Sigmoid colon (tissue), 7 donors: ENCODE measurements at regions of chr15 and their contacts with region 1.

Region 1: DNA sequence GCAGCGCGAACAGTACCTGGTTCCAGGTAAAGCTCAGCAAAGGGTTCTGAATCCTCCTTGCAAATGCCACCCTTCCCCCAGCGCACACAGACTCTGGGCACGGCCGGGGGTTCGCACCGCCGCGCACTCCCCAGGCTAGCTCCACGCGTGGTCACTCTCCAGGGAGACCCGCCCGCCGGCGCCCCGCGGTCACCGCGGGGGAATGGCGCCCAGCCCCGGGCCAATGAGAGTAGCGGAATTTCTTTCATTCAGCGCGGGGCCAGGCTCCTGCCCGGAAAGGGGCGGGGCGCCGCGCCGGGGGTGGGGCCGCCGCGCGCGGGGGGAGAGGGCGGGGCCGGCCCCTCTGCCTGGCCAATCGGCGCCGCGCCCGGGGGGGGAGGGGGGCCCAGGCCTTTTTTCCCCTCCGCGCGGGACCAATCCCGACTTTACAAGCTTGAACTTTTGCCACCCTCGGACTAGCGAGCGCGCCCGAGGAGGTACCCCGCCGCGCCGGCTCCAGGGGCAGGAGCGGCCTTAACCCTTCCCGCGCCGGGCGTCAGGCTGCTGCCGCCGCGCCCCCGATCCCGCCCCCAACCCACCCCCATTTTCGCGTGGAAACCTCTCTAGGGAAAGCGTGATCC is 1.1 kb upstream of the SMAD6 start:
- DNase-seq: peak; percentile 98
- H3K4me3 ChIP-seq: peak overlapping the region; percentile 57 to 72 (median 66)
- H3K27ac ChIP-seq: peak overlapping the region; percentile 87 to 92 (median 88)
- H3K4me1 ChIP-seq: peaks cover 0 to 44% (median 33%) of the 10 kb centered on the region in 4 donors
- H3K27me3 ChIP-seq: no peaks in the 10 kb centered on the region
- CTCF ChIP-seq: no peak
- EP300 ChIP-seq: peak in 1 of 4 donors; percentile 18
- POLR2A ChIP-seq: no peak

Region 2: GRCh38 chr15:66452971-66453580 is 247.8 kb before region 1 on chr15:
- intact Hi-C with region 1: no loop called
- DNase-seq: no peak
- H3K4me3 ChIP-seq: no peak overlapping the region
- H3K27ac ChIP-seq: no peak overlapping the region
- H3K4me1 ChIP-seq: no peaks in the 10 kb centered on the region
- H3K27me3 ChIP-seq: no peaks in the 10 kb centered on the region
- CTCF ChIP-seq: no peak
- EP300 ChIP-seq: no peak
- POLR2A ChIP-seq: no peak

Region 3: GRCh38 chr15:66619151-66619903 is 81.6 kb before region 1 on chr15:
- intact Hi-C with region 1: loop called (anchors 2 kb)
- DNase-seq: peak; percentile 86
- H3K4me3 ChIP-seq: no peak overlapping the region
- H3K27ac ChIP-seq: peak overlapping the region in 1 of 4 donors; percentile 32
- H3K4me1 ChIP-seq: peaks cover 0 to 41% (median 37%) of the 10 kb centered on the region in 4 donors
- H3K27me3 ChIP-seq: peaks cover 0 to 21% (median 17%) of the 10 kb centered on the region in 3 donors
- CTCF ChIP-seq: peak; percentile 60 to 88 (median 74)
- EP300 ChIP-seq: no peak
- POLR2A ChIP-seq: no peak

Region 4: DNA sequence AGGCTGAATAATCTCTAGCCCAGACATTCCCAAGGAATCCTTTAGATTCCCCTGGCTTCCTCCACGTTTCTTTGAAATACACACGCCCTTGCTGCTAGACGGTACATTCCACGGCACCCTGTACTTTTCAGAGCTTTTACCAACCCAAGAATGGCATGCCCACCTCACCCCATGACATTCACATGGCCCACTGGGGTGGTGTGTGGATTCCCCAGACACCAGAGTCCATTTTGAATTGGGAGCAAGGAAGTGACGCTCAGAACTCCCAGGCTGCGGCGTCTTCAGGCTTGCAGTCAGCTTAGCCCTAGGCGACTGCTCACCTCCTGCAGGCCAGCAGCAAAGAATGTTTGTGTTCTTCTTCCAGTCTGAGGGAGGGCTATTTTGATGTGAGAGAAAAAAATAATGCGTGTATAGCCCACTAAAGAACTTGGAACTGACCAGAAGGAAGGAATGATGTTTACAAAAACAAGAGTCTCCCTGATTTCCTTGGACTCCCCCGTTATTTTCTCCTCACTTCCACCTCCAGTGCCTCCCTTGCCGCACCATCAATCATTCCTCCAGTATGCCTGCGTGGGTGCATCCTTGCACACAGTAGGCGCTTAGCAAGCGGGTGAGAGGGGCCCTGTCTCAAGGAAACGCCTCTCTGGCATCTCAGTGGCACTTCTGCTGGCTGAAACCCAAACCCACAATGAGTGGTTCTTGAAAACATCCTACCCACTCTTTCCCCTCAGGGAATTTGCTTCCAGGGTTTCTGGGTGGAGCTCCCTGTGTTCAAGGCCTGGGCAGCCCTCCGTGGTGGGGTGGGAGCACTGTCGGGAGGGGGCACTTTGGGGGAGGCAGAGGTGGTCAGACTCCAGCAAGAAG is 61.0 kb after region 1 on chr15:
- intact Hi-C with region 1: no loop called
- DNase-seq: no peak
- H3K4me3 ChIP-seq: no peak overlapping the region
- H3K27ac ChIP-seq: peak overlapping the region in 2 of 4 donors; percentile 32 to 74
- H3K4me1 ChIP-seq: peaks cover 0 to 42% (median 40%) of the 10 kb centered on the region in 4 donors
- H3K27me3 ChIP-seq: no peaks in the 10 kb centered on the region
- CTCF ChIP-seq: no peak
- EP300 ChIP-seq: no peak
- POLR2A ChIP-seq: no peak

Region 5: DNA sequence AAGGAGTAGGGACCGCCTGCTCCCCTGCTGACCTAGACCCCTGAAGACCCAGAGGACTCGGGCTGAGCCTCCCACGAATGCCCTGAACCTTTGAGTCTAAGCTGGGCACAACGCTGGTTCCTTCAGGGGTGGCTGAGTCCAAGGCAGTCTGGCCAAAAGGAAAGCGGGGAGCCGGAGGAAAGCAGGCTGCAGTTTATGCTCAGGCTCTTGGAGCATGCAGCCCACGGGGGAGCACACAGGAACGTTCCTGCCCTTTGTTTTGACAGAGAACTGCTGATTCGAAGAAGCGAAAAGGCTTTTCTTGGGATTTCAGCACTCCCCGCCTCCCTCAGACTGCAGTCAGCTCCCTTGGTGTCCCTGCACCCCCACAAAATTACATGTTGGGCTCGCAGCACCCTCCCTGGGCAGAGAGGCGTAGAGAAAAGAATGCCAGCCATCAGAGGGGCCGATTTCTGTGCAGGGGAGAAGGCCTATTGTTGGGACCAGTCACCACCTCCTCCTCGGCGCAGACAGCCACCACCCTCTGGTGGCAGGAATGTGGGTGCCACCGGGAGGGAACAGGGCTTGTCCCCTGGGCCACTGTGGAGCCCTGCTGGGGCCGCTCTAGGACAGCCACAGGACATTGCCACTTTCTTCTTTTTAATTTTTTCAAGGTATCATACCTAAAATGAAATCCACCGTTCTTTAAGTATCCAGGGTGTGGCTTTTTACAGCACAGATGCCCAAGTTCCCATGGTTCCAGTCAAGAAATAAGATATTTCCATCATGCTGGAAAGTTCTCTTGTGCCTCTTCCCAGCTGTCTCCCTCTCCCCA is 73.3 kb after region 1 on chr15:
- intact Hi-C with region 1: loop called (anchors 2 kb)
- DNase-seq: peak; percentile 92
- H3K4me3 ChIP-seq: no peak overlapping the region
- H3K27ac ChIP-seq: peak overlapping the region; percentile 68 to 79 (median 72)
- H3K4me1 ChIP-seq: peaks cover 0 to 38% (median 34%) of the 10 kb centered on the region in 4 donors
- H3K27me3 ChIP-seq: no peaks in the 10 kb centered on the region
- CTCF ChIP-seq: peak; percentile 94 to 98 (median 97)
- EP300 ChIP-seq: no peak
- POLR2A ChIP-seq: no peak

Region 6: DNA sequence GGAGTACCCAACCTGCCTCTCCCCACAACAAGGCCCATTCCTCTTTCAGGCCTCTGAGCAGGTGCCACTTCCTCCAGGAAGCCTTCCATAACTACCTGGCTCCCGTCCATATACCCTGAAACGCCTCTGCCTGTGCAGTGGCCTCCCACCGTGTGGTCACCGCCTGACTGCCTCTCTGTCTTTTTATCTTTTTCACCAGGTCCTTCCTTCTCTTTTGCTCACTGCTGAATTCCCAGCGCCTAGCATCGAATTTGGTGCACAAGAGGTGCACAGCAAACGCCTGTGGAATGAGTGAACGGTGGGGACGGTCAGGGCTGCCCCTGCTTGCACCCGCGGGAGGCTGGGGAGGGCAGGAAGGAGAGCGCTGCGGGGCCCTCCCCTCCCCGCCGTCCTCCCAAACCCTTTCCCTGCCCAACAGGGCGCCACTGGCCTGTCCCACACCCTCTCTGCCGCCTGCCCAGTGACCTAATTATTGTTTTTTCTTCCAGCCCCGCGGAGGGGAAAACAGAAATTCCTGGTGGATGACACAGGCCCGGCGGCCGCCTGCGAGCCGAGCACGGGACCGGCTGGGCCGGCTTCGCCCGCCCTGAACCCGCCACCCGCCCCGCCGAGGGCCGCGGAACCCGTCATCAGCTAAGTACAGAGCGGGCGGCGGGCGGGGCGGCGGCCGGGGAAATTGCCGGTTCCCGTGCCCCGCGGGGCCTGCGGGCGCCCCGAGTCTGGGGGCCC is 141.2 kb after region 1 on chr15:
- intact Hi-C with region 1: loop called (anchors 2 kb)
- DNase-seq: peak; percentile 95
- H3K4me3 ChIP-seq: peak overlapping the region; percentile 23 to 60 (median 54)
- H3K27ac ChIP-seq: peak overlapping the region; percentile 84 to 96 (median 94)
- H3K4me1 ChIP-seq: peaks cover 0 to 15% (median 12%) of the 10 kb centered on the region in 4 donors
- H3K27me3 ChIP-seq: no peaks in the 10 kb centered on the region
- CTCF ChIP-seq: no peak
- EP300 ChIP-seq: peak in 2 of 4 donors; percentile 11 to 37
- POLR2A ChIP-seq: no peak

Region 7: GRCh38 chr15:67165254-67166253 is 464.6 kb after region 1 on chr15:
- intact Hi-C with region 1: no loop called
- DNase-seq: peak; percentile 60
- H3K4me3 ChIP-seq: no peak overlapping the region
- H3K27ac ChIP-seq: no peak overlapping the region
- H3K4me1 ChIP-seq: peaks cover 0 to 40% (median 17%) of the 10 kb centered on the region in 4 donors
- H3K27me3 ChIP-seq: no peaks in the 10 kb centered on the region
- CTCF ChIP-seq: no peak
- EP300 ChIP-seq: no peak
- POLR2A ChIP-seq: no peak